ENCODE measurements at regions of chr1 and their contacts with region 1.

Region 1: GRCh38 chr1:168000656-168001055 is 63.8 kb upstream of the MPC2 start:
- DNase-seq: no peak
- H3K4me3 ChIP-seq: no peak overlapping the region
- H3K27ac ChIP-seq: no peak overlapping the region
- H3K4me1 ChIP-seq: no peaks in the 10 kb centered on the region
- H3K27me3 ChIP-seq: no peaks in the 10 kb centered on the region
- CTCF ChIP-seq: no peak
- POLR2A ChIP-seq: no peak

Region 2: GRCh38 chr1:167977245-167977644 is 23.4 kb before region 1 on chr1:
- intact Hi-C with region 1: loop called (anchors 2 kb)
- DNase-seq: no peak
- H3K4me3 ChIP-seq: no peak overlapping the region
- H3K27ac ChIP-seq: no peak overlapping the region
- H3K4me1 ChIP-seq: no peaks in the 10 kb centered on the region
- H3K27me3 ChIP-seq: no peaks in the 10 kb centered on the region
- CTCF ChIP-seq: no peak
- POLR2A ChIP-seq: no peak

Region 3: GRCh38 chr1:168082008-168082876 is 81.6 kb after region 1 on chr1:
- intact Hi-C with region 1: no loop called
- DNase-seq: peak; percentile 39 to 73
- H3K4me3 ChIP-seq: no peak overlapping the region
- H3K27ac ChIP-seq: peak overlapping the region in 1 of 2 donors; percentile 79
- H3K4me1 ChIP-seq: no peaks in the 10 kb centered on the region
- H3K27me3 ChIP-seq: no peaks in the 10 kb centered on the region
- CTCF ChIP-seq: peak; percentile 48 to 71 (median 61)
- POLR2A ChIP-seq: no peak